ENCODE measurements at regions of chr5 and their contacts with region 1.

Region 1: GRCh38 chr5:71601222-71602041 is 14.3 kb downstream of the MCCC2 start:
- DNase-seq: peak; percentile 32
- ATAC-seq: peak; percentile 99
- H3K4me3 Mint-ChIP-seq: no peak overlapping the region
- H3K27ac Mint-ChIP-seq: no peak overlapping the region
- H3K4me1 Mint-ChIP-seq: no peaks in the 10 kb centered on the region
- H3K27me3 Mint-ChIP-seq: no peaks in the 10 kb centered on the region
- CTCF ChIP-seq: peak; percentile 57

Region 2: GRCh38 chr5:71528206-71528605 is 73.2 kb before region 1 on chr5:
- CTCF ChIA-PET with region 1: no interaction called
- POLR2A ChIA-PET with region 1: no interaction called
- DNase-seq: no peak
- ATAC-seq: no peak
- H3K4me3 Mint-ChIP-seq: no peak overlapping the region
- H3K27ac Mint-ChIP-seq: no peak overlapping the region
- H3K4me1 Mint-ChIP-seq: no peaks in the 10 kb centered on the region
- H3K27me3 Mint-ChIP-seq: no peaks in the 10 kb centered on the region
- CTCF ChIP-seq: no peak

Region 3: DNA sequence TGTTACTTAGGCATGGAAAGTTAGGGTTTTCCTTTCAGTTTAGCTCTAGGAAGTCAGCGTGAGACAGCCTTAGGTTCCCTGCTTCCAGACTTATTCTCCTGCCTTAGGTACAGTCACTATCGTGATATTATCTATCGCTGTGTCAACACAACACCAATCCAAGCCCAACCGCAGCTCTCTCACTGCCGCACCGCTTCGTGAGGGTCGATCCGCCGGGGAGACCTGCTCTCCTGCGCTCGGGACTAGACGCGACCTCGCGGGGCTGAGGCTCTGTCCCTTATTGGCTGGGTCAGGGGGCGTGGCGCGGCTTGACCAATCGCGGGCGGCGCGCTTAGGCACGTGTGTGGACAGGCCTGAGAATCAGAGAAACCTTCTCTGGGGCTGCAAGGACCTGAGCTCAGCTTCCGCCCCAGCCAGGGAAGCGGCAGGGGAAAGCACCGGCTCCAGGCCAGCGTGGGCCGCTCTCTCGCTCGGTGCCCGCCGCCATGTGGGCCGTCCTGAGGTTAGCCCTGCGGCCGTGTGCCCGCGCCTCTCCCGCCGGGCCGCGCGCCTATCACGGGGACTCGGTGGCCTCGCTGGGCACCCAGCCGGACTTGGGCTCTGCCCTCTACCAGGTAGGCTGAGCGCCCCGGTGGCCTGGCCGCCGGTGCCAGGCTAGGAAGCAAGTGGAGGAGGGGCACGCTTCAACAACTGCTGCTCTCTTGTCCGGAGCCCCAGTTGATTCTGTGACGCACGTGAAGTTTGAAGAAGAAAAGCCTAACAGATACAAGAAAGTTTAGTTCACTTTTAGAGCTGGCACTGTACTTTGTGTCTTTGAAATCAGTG is 14.3 kb before region 1 on chr5 and contains the start of gene MCCC2:
- CTCF ChIA-PET with region 1: interaction called, 27 read pairs
- POLR2A ChIA-PET with region 1: interaction called, 3 read pairs
- DNase-seq: peak; percentile 99
- ATAC-seq: peak; percentile 98
- H3K4me3 Mint-ChIP-seq: peak within 1 kb of the TSS; percentile 91
- H3K27ac Mint-ChIP-seq: peak within 1 kb of the TSS; percentile 99
- H3K4me1 Mint-ChIP-seq: peaks cover 14% of the 10 kb centered on the region
- H3K27me3 Mint-ChIP-seq: no peaks in the 10 kb centered on the region
- CTCF ChIP-seq: no peak
- total RNA-seq, gene MCCC2: 65.0 to 65.9 TPM (median 65.4 TPM) in 3 replicates

Measured in WTC11 (cell line).